Right ventricle myocardium inferior (tissue), 1 donor: ENCODE measurements at regions of chr2 and their contacts with region 1.

Region 1: DNA sequence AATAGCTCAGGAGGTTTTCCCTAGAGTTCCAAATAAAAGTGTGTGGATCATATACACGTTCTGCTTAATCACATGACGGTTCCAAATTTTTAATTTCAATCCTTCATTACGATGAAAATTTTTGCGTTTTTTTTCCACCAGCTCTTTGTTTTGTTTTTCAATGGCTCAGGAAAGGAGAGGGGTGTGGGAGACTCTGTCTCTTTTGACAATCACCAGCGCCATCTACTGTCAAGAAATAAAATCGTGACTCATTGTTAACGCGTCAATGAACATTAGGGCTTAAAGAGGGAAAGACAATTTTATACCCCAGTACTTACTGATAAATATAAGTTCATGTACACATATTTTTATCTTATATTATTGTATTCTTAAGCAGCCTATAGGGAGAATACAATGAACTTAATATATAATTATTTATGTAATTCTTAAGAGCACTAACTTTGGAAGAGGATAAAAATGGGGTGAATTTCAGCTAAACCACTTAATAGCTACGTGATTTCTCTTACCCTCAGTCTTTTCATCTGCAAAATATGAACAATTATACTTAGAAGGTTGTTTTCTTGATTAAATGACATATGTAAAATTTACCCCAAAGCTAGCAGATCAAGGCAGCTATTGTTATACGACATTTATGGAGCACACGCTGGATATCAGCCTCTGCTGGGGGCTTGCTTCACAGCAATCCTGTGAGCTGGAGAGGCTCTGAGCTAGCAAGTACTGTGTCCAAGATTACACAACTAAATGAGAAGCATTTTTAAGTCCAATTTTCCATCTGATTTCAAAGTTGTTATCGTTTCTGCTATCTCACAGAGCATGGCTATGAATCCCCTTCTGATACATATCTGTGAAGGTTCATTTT is 47.4 kb upstream of the RMDN2 start:
- DNase-seq: no peak
- ATAC-seq: peak; percentile 52

Region 2: GRCh38 chr2:37168217-37168981 is 709.3 kb before region 1 on chr2:
- intact Hi-C with region 1: loop called (anchors 10 kb)
- DNase-seq: peak; percentile 55
- ATAC-seq: no peak

Region 3: DNA sequence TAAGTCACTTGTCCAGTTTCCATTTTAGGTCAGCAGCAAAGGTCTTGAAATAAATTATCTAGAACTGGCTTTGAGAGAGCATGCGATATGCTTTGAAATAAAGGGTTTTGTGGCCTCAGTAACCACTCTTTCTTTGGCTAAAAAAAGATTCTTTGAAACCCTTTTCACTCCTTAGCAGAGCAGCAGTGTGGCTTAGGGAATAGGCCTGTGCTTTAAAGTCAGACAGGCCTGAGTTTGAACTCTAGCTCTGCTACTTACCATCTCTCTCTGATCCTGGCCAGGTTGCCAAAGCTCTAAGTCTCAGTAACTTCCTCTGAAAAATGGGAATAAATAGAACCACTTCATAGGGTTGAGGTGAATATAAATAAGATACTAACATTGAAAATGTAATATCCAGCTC is 480.5 kb before region 1 on chr2:
- intact Hi-C with region 1: loop called (anchors 2 kb)
- DNase-seq: no peak
- ATAC-seq: no peak

Region 4: DNA sequence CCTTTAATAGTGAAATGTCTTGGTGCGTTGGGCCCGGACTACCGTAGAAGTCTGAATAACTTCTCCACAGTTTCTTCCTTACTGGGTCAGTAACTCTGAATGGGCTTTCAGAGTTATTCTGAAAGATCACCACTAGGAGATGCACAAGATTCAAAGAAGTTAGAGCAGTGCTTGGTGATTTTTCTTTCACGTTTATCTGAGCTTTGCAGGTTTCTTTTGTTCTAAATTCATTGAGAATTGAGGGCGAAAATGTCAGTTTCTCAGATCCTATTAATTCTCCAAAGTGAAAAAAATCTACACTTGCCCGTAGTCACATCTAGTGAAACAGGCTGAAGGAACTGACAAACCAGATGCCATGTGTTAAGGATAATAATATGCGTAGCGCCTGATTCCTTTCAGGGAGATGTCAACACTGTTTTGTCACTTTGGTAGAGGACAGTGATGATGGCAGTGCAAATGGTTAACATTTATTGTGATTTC is 463.2 kb before region 1 on chr2:
- intact Hi-C with region 1: loop called (anchors 5 kb)
- DNase-seq: no peak
- ATAC-seq: peak; percentile 75

Region 5: DNA sequence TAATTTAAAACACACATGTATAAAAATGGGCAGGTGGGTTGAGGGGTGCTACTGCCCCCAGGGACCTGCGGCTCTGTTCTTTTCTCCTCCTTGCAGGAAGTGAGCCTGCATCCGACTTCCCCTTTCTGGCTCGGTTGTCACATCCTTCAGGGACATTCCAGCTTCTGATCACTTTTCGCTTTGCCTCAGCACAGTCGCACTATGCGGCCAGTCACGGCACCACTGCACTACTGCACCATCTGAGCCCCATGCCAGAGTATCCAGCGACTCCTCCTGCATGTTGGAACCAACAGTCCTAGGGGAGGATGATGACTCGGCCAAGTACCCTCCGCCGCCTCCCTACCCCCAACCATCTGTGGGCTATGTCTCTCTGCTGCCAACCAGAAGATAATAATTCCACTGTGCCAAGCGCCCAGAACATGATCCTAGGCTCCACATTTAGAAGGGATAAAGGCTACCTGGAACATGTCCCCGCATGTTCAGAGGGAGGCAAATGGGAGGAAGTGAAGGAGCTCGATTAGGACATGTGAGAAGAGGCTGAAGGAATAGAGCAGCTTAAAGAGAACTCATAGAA is 223.8 kb before region 1 on chr2:
- intact Hi-C with region 1: loop called (anchors 5 kb)
- DNase-seq: peak; percentile 76
- ATAC-seq: peak; percentile 84

Region 6: GRCh38 chr2:37944252-37944651 is 66.6 kb after region 1 on chr2:
- intact Hi-C with region 1: no loop called
- DNase-seq: no peak
- ATAC-seq: no peak